ENCODE measurements at regions of chr20 and their contacts with region 1.

Region 1: DNA sequence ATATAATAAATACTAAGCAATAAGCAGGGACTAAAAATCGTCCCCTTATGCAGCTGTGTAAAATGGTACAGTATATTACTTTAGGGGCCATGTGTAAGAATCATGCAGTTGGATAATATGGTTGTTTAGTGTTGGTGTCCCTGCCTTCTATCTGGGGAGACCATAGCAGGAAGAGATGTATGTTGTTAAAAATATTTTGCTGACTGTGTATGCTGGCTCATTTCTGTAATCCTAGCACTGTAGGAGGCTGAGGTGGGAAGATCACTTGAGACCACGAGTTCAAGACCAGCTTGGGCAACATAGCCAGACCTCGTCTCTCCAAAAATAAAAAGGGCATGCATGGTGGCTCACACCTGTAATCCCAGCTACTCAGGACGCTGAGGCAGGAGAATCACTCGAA is 5.6 kb downstream of the PANK2 start:
- DNase-seq: no peak
- ATAC-seq: no peak
- H3K4me3 ChIP-seq: no peak overlapping the region
- H3K27ac ChIP-seq: no peak overlapping the region
- H3K4me1 ChIP-seq: peaks cover 7 to 98% (median 93%) of the 10 kb centered on the region in 9 donors
- H3K27me3 ChIP-seq: no peaks in the 10 kb centered on the region
- CTCF ChIP-seq: no peak

Region 2: DNA sequence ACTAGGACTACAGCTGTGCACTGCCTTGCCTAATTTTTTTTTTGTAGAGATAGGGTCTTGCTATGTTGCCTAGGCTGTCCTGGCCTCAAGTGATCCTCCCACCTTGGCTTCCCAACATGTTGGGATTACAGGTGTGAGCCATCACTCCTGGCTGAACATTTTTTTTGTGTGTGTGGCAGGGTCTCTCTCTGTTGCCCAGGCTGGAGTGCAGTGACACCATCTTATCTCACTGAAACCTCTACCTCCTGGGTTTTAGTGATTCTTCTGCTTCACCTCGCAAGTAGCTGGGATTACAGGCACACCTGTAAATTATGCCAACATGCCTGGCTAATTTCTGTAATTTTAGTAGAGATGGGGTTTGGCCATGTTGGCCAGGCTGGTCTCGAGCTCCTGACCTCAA is 19.6 kb after region 1 on chr20:
- intact Hi-C with region 1: loop called in 1 of 10 experiments (anchors 1 kb)
- DNase-seq: no peak
- ATAC-seq: no peak
- H3K4me3 ChIP-seq: no peak overlapping the region
- H3K27ac ChIP-seq: no peak overlapping the region
- H3K4me1 ChIP-seq: peaks cover 0 to 32% (median 13%) of the 10 kb centered on the region in 9 donors
- H3K27me3 ChIP-seq: no peaks in the 10 kb centered on the region
- CTCF ChIP-seq: no peak

Region 3: DNA sequence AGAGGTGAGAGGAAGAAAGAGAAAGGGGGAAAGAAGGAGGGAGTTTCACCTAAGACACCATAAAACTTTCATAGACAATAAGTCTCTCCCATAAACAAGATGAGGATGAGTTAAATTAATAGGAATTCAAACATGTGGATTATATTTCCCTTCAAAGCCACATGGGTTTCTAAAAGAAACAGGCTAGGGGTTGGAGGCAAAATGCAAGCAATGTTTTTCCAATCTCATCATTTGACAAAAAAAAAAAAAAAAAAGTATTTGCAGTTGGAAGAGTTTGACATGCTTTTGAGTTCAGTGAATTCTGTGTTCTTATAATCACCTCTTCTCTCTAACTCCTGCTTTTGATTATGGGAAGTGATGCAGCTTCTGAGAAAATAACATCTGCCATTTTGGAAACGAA is 540.4 kb after region 1 on chr20:
- intact Hi-C with region 1: no loop called
- DNase-seq: no peak
- ATAC-seq: no peak
- H3K4me3 ChIP-seq: no peak overlapping the region
- H3K27ac ChIP-seq: no peak overlapping the region
- H3K4me1 ChIP-seq: no peaks in the 10 kb centered on the region
- H3K27me3 ChIP-seq: peaks cover 0 to 7% (median 0%) of the 10 kb centered on the region in 7 donors
- CTCF ChIP-seq: no peak

Measured in heart right ventricle (tissue), 16 donors.